Transverse colon (tissue), 4 donors: ENCODE measurements at regions of chr17 and their contacts with region 1.

Region 1: DNA sequence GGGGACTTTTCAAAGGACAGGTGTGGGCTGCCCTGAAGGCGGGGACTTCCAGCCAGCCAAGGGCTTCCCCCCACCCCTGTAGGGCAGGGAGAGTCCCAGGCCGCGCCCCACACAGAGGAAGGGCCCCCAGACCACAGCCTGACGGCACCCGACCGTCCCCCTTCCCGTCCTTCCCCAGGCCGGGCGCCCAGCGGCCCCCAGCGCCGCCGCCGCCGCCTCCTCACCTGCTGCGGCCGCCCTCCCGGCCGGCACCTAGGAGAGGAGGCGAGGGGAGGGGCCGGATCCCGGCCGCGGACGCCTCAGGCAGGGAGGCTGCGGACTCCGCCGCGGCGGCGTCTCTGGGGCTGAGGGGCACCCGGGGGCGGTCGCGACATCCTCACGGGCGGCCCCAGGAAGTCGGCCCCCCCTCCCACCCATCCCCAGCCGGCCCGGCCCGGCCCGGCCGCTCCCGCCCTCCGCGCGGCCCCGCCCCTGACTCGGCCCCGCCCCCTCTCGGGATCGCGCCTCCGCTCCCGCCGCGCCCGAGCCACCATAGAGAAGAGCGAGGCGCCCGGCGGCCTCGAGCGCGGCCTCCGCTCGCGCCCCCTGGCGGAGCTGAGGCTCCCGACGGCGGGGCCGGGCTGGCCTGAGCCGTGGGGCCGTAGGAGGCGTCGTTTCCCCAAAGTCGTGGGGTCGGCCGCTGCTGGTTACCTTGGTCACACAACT is 25.5 kb upstream of the RFFL start:
- DNase-seq: peak; percentile 93
- H3K4me3 ChIP-seq: peak overlapping the region; percentile 89 to 97 (median 90)
- H3K27ac ChIP-seq: peak overlapping the region; percentile 93 to 99 (median 98)
- H3K4me1 ChIP-seq: peaks cover 5 to 41% (median 40%) of the 10 kb centered on the region in 4 donors
- H3K27me3 ChIP-seq: no peaks in the 10 kb centered on the region
- CTCF ChIP-seq: peak in 4 of 5 experiments; percentile 73 to 93 (median 87)
- EP300 ChIP-seq: no peak
- POLR2A ChIP-seq: peak; percentile 10

Region 2: GRCh38 chr17:34980681-34981537 is 108.1 kb before region 1 on chr17:
- in situ Hi-C with region 1: loop called in 1 of 4 experiments (anchors 25 kb)
- intact Hi-C with region 1: no loop called
- DNase-seq: peak; percentile 78
- H3K4me3 ChIP-seq: peak overlapping the region; percentile 73 to 97 (median 80)
- H3K27ac ChIP-seq: peak overlapping the region; percentile 96 to 100 (median 96)
- H3K4me1 ChIP-seq: peaks cover 3 to 29% (median 13%) of the 10 kb centered on the region in 4 donors
- H3K27me3 ChIP-seq: no peaks in the 10 kb centered on the region
- CTCF ChIP-seq: peak; percentile 33 to 57 (median 41)
- EP300 ChIP-seq: no peak
- POLR2A ChIP-seq: peak; percentile 63

Region 3: GRCh38 chr17:34998205-34998604 is 90.8 kb before region 1 on chr17:
- in situ Hi-C with region 1: loop called (anchors 10 to 25 kb)
- intact Hi-C with region 1: loop called (anchors 1 kb)
- DNase-seq: peak; percentile 80
- H3K4me3 ChIP-seq: no peak overlapping the region
- H3K27ac ChIP-seq: peak overlapping the region; percentile 66 to 87 (median 76)
- H3K4me1 ChIP-seq: peaks cover 0 to 31% (median 5%) of the 10 kb centered on the region in 4 donors
- H3K27me3 ChIP-seq: no peaks in the 10 kb centered on the region
- CTCF ChIP-seq: peak; percentile 76 to 94 (median 79)
- EP300 ChIP-seq: no peak
- POLR2A ChIP-seq: no peak

Region 4: GRCh38 chr17:35022536-35023063 is 66.4 kb before region 1 on chr17:
- in situ Hi-C with region 1: no loop called
- intact Hi-C with region 1: loop called (anchors 5 kb)
- DNase-seq: peak; percentile 59
- H3K4me3 ChIP-seq: no peak overlapping the region
- H3K27ac ChIP-seq: peak overlapping the region; percentile 35 to 76 (median 70)
- H3K4me1 ChIP-seq: peaks cover 9 to 47% (median 13%) of the 10 kb centered on the region in 4 donors
- H3K27me3 ChIP-seq: no peaks in the 10 kb centered on the region
- CTCF ChIP-seq: peak in 4 of 5 experiments; percentile 16 to 46 (median 31)
- EP300 ChIP-seq: peak; percentile 90
- POLR2A ChIP-seq: no peak